Caco-2 (cell line): ENCODE measurements at regions of chr19 and their contacts with region 1.

Region 1: DNA sequence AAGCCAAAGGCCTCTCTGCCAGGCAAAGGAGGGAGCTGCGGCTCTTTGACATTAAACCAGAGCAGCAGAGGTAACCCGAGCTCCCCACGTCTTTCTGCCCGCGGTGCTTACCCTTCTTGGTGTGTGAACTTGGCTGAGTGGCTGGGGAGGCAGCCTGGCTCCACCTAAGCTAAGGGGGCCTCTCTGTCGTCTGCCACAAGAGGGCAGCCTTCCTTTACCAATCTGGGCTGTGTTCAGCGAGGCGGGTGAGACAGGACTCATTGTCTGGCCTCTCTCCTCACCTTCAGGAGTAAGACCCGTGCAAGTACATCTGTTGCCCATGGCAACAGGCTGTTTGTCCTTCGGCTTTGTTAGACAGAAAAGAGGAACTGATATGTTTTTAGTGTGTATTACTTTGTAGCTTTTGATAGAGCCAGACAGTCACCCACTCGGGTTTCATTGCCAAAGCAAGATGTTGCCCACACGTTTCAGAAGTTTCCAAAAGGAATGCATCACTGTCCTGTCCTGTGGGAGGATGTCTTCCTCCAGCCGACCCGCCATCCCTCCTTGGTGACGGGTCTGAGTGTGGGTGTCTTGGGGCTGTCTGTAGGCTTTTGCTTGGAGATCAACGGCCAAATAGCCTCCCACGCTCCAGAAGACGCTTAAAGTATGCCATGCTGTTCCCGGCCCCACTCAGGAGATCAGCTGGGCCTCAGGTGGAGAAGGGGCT is 4.6 kb downstream of the POP4 start:
- DNase-seq: peak; percentile 81 to 83
- H3K4me3 ChIP-seq: no peak overlapping the region
- H3K4me3 Mint-ChIP-seq: no peak overlapping the region
- H3K27ac Mint-ChIP-seq: no peak overlapping the region
- H3K4me1 ChIP-seq: no peaks in the 10 kb centered on the region
- H3K4me1 Mint-ChIP-seq: no peaks in the 10 kb centered on the region
- H3K27me3 ChIP-seq: no peaks in the 10 kb centered on the region
- H3K27me3 Mint-ChIP-seq: no peaks in the 10 kb centered on the region
- CTCF ChIP-seq: peak; percentile 82 to 88

Region 2: GRCh38 chr19:29665215-29665825 is 54.6 kb after region 1 on chr19 and contains the start of gene PLEKHF1:
- CTCF ChIA-PET with region 1: interaction called, 4 read pairs
- POLR2A ChIA-PET with region 1: interaction called, 15 read pairs
- intact Hi-C with region 1: loop called (anchors 2 kb)
- DNase-seq: peak; percentile 83 to 97
- H3K4me3 ChIP-seq: peak within 1 kb of the TSS; percentile 92
- H3K4me3 Mint-ChIP-seq: peak within 1 kb of the TSS; percentile 92
- H3K27ac Mint-ChIP-seq: no peak within 1 kb of the TSS
- H3K4me1 ChIP-seq: peaks cover 23% of the 10 kb centered on the region
- H3K4me1 Mint-ChIP-seq: peaks cover 15% of the 10 kb centered on the region
- H3K27me3 ChIP-seq: no peaks in the 10 kb centered on the region
- H3K27me3 Mint-ChIP-seq: no peaks in the 10 kb centered on the region
- CTCF ChIP-seq: no peak
- total RNA-seq, gene PLEKHF1: 3.6 and 5.0 TPM in 2 replicates

Region 3: DNA sequence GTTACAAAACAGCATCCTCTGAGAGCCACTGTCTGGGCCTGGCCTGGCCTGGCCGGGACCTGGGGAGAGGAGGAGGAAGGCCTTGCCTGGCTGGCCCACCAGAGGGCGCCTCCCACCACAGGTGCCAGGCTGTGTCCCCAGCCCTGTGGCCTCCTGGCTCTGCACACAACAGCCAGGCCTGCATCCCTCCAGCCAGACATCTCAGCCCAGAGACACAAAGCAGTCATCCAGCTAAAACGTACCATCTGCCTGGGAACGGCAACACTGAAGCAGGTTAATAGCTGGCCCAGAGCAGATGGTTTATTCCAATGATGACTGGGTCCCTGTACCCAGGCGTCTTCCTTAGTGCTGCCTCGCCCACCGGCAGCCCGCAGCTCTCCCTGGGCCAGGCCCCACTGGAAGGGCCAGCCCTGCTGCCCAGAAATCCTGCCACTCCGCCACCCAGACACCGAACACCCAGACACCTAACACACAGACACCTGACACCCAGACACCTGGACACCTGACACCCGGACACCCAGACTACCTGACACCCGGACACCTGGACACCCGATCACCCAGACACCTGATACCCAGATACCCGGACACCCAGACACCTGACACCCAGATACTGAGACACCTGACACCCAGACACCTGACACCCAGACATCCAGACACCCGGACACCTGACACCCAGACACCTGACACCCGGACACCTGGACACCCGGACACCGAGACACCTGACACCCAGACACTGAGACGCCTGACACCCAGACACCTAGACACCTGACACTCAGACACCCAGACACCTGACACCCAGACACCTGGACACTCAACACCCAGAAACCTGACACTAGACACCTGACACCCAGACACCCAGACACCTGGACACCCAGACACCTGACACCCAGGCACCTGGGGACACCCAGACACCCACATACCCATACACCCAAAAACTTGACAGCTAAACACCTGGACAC is 84.2 kb after region 1 on chr19:
- CTCF ChIA-PET with region 1: no interaction called
- POLR2A ChIA-PET with region 1: no interaction called
- intact Hi-C with region 1: loop called (anchors 1 kb)
- DNase-seq: peak; percentile 67 to 74
- H3K4me3 ChIP-seq: no peak overlapping the region
- H3K4me3 Mint-ChIP-seq: no peak overlapping the region
- H3K27ac Mint-ChIP-seq: no peak overlapping the region
- H3K4me1 ChIP-seq: no peaks in the 10 kb centered on the region
- H3K4me1 Mint-ChIP-seq: no peaks in the 10 kb centered on the region
- H3K27me3 ChIP-seq: no peaks in the 10 kb centered on the region
- H3K27me3 Mint-ChIP-seq: no peaks in the 10 kb centered on the region
- CTCF ChIP-seq: peak; percentile 74 to 84

Region 4: DNA sequence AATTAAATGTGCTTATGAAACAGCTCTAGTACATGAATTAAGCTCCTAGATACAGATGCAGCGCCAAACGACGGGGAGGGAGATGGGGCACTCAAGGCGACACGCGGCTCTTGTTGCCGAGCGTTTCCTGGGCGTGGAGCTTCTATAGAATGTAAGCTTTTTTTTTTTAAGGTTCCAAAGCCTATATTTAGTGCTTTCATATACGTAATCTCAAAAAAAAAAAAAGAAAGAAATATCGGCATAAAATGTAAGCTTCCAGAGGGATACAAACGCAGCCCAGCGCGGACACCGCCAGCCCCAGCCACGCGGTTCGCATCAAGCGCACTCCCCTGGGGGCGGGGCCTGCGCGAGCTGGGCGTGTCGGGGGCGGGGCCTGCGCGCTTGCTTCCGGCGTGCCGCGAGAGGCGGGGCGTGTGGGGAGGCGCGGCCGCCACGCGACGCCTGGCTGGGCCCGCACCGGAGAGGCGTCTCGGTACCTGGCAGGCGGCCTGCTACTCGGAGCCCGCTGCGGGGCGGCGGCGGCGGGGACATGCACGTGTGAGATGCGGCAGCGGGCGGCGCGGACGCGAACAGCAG is 331.2 kb after region 1 on chr19 and contains the start of gene URI1:
- CTCF ChIA-PET with region 1: no interaction called
- POLR2A ChIA-PET with region 1: interaction called, 4 read pairs
- intact Hi-C with region 1: loop called (anchors 5 kb)
- DNase-seq: peak; percentile 90 to 97
- H3K4me3 ChIP-seq: peak within 1 kb of the TSS; percentile 56
- H3K4me3 Mint-ChIP-seq: peak within 1 kb of the TSS; percentile 98
- H3K27ac Mint-ChIP-seq: peak within 1 kb of the TSS; percentile 92
- H3K4me1 ChIP-seq: peaks cover 8% of the 10 kb centered on the region; the same call in 1 of the 2 replicates
- H3K4me1 Mint-ChIP-seq: peaks cover 12% of the 10 kb centered on the region
- H3K27me3 ChIP-seq: no peaks in the 10 kb centered on the region
- H3K27me3 Mint-ChIP-seq: no peaks in the 10 kb centered on the region
- CTCF ChIP-seq: no peak
- total RNA-seq, gene URI1: 53.9 and 59.5 TPM in 2 replicates